ENCODE measurements at regions of chr1 and their contacts with region 1.

Region 1: DNA sequence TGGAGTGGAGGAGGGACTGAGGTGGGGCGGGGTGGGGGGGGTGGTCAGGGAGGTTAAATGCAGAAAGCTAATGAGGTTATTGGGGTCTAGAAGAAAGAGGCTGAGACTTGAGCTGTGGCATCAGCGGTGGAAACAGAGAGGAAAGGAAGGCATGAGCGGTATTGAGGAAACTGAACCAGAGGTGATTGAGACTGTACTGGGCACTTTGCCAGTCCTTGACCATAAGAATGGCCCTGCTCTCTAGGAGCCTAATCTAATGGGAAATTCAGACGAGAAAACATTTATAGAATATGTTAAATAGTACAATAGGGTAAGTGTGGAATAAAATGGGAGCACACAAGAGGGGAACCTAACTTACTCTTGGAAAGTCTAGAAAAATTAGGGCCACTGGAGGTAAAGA is 23.7 kb downstream of the SLC44A3 start:
- DNase-seq: no peak
- ATAC-seq: no peak
- H3K4me3 ChIP-seq: no peak overlapping the region
- H3K27ac ChIP-seq: no peak overlapping the region
- H3K4me1 ChIP-seq: peaks cover 0 to 8% (median 0%) of the 10 kb centered on the region in 12 donors
- H3K27me3 ChIP-seq: no peaks in the 10 kb centered on the region
- CTCF ChIP-seq: no peak
- POLR2A ChIP-seq: no peak

Region 2: DNA sequence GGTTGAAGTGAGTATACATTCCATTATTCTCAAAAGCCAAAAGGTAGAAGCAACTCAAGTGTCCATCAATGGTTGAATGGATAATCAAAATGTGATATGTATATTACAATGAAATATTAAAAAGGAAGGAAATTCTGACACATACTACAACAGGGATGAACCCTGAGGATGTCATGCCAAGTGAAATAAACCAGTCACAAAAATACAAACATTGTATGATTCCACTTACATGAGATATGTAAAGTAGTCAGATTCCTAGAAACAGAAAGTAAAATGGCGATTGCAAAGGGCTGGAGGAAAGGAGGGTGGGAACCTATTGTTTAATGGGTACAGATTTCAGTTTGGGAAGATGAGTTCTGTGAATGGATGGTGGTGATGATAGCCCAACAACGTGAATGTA is 17.9 kb before region 1 on chr1:
- intact Hi-C with region 1: loop called in 1 of 10 experiments (anchors 2 kb)
- DNase-seq: no peak
- ATAC-seq: no peak
- H3K4me3 ChIP-seq: no peak overlapping the region
- H3K27ac ChIP-seq: no peak overlapping the region
- H3K4me1 ChIP-seq: peaks cover 0 to 9% (median 0%) of the 10 kb centered on the region in 12 donors
- H3K27me3 ChIP-seq: peaks cover 0 to 18% (median 0%) of the 10 kb centered on the region in 9 donors
- CTCF ChIP-seq: no peak
- POLR2A ChIP-seq: no peak

Measured in heart left ventricle (tissue), 16 donors.